ENCODE measurements at regions of chr20 and their contacts with region 1.

Region 1: DNA sequence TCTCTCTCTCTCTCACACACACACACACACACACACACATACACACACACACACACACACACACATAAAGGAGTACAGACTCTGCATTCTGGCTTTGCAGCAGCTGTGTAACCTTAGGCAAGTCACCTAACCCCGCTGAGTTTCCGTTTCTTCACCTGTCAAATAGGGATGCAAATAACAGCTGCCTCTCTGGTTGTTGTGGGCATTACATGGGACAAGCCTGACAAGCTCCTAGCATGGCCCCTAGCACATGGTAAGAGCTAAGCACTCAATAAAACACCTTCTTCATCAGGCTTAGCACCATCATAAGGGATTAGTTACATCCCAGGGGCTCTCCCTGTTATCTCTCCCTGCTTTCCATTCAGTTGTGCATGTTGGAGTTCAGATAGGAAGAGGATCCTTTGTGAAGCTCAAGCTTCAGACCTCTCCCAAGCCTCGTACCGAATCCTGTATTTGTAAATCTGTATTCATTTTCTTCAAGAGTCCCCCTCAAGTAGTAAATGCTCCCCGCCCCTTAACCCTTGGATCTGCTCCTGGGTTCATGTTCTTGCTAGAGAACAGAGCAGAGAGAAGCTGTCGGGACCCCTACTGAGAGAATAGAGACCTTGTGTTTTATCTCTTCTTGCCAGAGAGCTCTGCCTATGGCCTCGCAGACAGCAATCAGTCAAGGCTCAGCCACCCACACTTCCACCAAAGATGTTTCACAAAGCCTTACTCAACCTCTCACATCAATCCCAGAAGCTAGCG is 2.2 kb downstream of the SLC13A3 start:
- DNase-seq: no peak
- H3K4me3 ChIP-seq: no peak overlapping the region
- H3K27ac ChIP-seq: no peak overlapping the region
- H3K4me1 ChIP-seq: no peaks in the 10 kb centered on the region
- H3K27me3 ChIP-seq: peaks cover 3% of the 10 kb centered on the region
- CTCF ChIP-seq: no peak

Region 2: GRCh38 chr20:46308258-46309157 is 340.6 kb before region 1 on chr20 and contains the start of gene CDH22:
- CTCF ChIA-PET with region 1: no interaction called
- dilution Hi-C with region 1: no loop called
- in situ Hi-C with region 1: no loop called
- intact Hi-C with region 1: no loop called
- DNase-seq: no peak
- H3K4me3 ChIP-seq: peak within 1 kb of the TSS in 1 of 3 experiments; percentile 13
- H3K27ac ChIP-seq: no peak within 1 kb of the TSS
- H3K4me1 ChIP-seq: peaks cover 8% of the 10 kb centered on the region
- H3K27me3 ChIP-seq: peaks cover 33% of the 10 kb centered on the region
- CTCF ChIP-seq: no peak
- total RNA-seq, gene CDH22: not detected

Region 3: DNA sequence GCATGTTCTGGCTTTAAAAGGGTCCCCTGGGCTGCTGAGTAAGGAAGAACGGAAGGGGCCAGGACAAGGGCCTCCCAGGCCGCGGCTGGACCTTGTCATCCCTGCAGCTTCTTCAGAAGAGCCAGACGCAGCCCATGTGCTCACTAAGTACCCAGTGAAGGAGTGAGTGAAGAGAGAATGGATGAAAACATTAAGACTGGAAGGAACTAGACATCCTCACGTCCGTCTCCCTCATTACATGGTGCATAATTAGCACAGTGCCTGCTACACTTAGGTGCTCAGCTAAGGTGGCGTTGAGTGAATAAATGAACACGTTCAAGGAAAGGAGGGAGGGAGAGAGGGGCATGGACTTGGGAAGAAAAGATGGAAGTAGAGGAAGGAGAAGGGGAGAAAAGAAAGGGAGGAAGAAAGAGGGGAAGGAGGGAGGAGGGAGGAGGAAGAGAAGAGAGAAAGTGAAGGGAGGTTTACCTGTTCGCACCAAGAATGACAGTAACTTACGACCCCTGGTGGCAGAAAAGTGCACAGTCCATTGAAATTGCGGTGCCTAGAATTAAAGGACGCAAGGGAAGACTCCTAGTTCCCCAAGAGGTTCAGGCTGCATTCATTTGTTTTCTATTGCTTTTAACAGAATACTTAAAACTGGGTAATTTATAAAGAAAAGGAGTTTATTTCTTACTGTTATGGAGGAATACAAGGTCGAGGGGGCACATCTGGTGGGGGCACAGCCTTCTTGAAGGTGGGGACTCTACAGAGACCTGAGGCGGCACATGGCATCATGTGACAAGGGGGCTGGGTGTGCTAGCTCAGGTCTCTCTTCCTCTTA is 32.2 kb after region 1 on chr20:
- CTCF ChIA-PET with region 1: no interaction called
- dilution Hi-C with region 1: loop called (anchors 5 kb)
- in situ Hi-C with region 1: no loop called
- intact Hi-C with region 1: no loop called
- DNase-seq: peak; percentile 48
- H3K4me3 ChIP-seq: no peak overlapping the region
- H3K27ac ChIP-seq: no peak overlapping the region
- H3K4me1 ChIP-seq: peaks cover 7% of the 10 kb centered on the region
- H3K27me3 ChIP-seq: no peaks in the 10 kb centered on the region
- CTCF ChIP-seq: peak; percentile 83 to 90

Region 4: GRCh38 chr20:46720776-46721425 is 71.8 kb after region 1 on chr20:
- CTCF ChIA-PET with region 1: no interaction called
- dilution Hi-C with region 1: loop called (anchors 10 kb)
- in situ Hi-C with region 1: no loop called
- intact Hi-C with region 1: no loop called
- DNase-seq: no peak
- H3K4me3 ChIP-seq: no peak overlapping the region
- H3K27ac ChIP-seq: no peak overlapping the region
- H3K4me1 ChIP-seq: no peaks in the 10 kb centered on the region
- H3K27me3 ChIP-seq: peaks cover 2% of the 10 kb centered on the region
- CTCF ChIP-seq: no peak

Region 5: GRCh38 chr20:46994341-46994740 is 345.3 kb after region 1 on chr20:
- CTCF ChIA-PET with region 1: no interaction called
- dilution Hi-C with region 1: no loop called
- in situ Hi-C with region 1: no loop called
- intact Hi-C with region 1: no loop called
- DNase-seq: peak; percentile 48
- H3K4me3 ChIP-seq: no peak overlapping the region
- H3K27ac ChIP-seq: no peak overlapping the region
- H3K4me1 ChIP-seq: peaks cover 11% of the 10 kb centered on the region
- H3K27me3 ChIP-seq: no peaks in the 10 kb centered on the region
- CTCF ChIP-seq: no peak